ENCODE measurements at regions of chr1 and their contacts with region 1.

Region 1: DNA sequence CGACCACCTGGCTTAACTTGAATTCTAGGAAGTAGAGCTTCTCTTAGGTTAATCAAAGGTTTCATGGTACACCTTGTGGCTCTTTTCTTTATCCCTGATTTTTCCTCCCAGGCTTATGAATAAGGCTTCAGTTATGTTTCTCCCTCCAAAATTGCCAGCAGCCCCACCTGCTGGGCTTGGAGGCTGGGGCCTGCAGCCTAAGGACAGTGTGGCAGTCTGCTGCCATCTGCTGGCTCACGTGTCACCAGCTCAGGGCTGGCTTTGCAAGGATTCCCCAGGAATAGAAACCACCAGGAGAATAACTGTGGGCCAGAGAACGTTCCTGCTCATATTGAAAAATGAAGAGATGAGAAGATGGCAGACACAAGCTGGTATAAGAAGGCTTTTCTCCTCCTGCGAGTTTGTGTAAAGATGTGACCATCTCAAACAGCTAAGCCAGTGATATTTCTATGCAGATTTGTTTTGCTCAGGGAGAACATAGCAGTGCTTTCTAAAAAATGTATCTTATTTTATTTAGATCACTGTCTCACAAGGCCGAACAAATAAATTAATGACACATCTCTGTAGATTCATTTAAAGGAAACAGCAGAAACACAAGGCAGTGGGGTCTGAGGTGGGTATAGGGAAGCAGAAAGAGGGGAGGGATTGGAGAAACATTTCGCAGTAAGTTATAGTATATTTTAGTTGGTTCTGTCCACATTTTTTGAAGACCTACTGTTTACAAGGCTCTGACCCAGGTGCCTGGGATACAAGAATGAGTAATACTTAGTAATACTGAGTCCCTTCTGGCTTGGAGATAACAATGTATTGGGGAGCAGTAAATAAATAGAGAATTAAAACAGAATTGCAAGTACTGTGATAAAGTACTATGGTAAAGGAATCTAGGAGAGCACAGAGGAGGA is 291.1 kb upstream of the SGIP1 start:
- DNase-seq: peak; percentile 81

Region 2: GRCh38 chr1:65459397-65459768 is 783.5 kb before region 1 on chr1:
- in situ Hi-C with region 1: no loop called
- DNase-seq: peak; percentile 69

Region 3: DNA sequence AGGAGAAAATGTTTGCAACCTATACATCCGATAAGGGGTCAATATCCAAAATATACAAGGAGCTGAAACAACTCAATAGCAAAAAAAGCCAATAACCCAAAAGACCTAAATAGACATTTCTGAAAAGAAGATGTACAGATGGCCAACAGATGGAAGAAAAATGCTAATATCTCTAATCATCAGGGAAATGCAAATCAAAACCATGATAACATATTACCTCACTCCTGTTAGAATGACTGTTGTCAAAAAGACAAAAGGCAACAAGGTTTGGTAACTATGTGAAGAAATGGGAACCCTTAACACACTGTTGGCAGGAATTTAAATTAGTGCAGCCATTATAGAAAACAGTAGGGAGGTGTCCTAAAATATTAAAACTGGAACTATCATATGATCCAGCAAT is 747.8 kb before region 1 on chr1:
- in situ Hi-C with region 1: no loop called
- DNase-seq: no peak

Region 4: GRCh38 chr1:65650682-65651081 is 592.2 kb before region 1 on chr1:
- in situ Hi-C with region 1: no loop called
- DNase-seq: no peak

Region 5: GRCh38 chr1:65717815-65718454 is 525.0 kb before region 1 on chr1:
- in situ Hi-C with region 1: loop called (anchors 25 kb)
- DNase-seq: peak; percentile 25

Region 6: DNA sequence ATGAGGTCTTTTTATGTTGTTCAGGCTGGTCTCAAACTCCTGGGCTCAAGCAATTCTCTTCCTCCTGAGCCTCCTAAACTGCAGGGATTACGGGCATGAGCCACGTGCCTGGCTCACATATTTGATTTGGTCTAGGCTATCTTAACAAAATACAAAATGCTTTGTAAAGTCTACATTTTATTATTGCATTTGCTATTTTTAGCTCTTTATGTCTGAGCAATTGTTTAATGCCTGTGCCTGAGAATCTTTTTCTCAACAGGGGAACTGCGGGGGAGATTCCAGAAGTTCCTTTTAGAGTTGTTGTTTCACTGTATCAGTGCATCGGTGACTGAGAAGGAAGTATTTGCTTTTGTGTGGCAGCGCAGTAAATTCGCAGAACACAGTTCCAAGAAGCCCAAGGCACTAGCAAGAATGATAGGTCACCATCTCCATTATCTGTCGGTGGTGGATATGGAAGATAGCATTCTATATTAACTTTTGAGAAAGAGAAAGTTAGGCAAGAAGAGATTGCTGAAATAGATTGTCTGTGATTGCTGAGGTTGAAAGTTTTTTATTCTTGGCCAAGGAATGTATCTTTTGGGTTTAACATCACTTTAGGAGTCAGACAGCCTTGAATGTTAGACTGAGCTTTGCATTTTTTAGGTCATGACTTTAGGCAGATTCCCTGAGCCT is 282.9 kb before region 1 on chr1:
- in situ Hi-C with region 1: loop called (anchors 10 kb)
- DNase-seq: peak; percentile 47

Measured in KBM-7 (cell line).